Aorta (tissue), 5 donors: ENCODE measurements at regions of chr20 and their contacts with region 1.

Region 1: DNA sequence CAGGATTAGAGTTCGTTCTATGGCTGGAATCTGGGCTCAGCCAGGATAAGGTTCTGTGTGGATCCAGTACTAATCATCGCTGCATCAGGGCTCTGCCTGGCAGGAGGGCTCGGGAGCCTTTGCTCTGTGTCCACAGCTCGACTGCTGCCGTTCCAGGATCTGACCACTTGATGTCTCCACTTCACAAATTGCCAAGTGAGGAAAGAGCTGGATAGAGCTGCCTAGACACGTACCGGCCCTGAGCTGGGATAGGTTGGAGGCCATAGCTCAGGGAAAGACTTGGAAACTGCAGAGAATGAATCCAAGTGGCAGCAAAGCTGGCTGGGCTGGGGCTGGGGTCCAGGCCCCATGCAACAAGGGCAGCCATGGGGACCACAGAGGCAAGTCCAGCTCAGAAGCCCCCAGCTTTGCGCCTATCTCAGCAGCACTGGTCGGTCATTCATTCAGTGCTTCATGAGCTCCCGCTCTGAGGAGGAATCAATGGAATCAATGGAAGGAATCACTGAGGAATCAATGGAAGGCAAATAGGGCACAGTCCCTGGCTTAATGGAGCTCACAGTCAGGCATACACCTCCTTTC is 38.0 kb upstream of the TOP1 start:
- DNase-seq: peak; percentile 87 to 89
- ATAC-seq: peak; percentile 92
- H3K4me3 ChIP-seq: no peak overlapping the region
- H3K27ac ChIP-seq: no peak overlapping the region
- H3K4me1 ChIP-seq: no peaks in the 10 kb centered on the region
- H3K27me3 ChIP-seq: no peaks in the 10 kb centered on the region

Region 2: GRCh38 chr20:40931410-40932044 is 59.1 kb before region 1 on chr20:
- intact Hi-C with region 1: no loop called
- DNase-seq: no peak
- ATAC-seq: no peak
- H3K4me3 ChIP-seq: no peak overlapping the region
- H3K27ac ChIP-seq: peak overlapping the region in 1 of 2 donors; percentile 15
- H3K4me1 ChIP-seq: no peaks in the 10 kb centered on the region
- H3K27me3 ChIP-seq: peaks cover 0 to 3% of the 10 kb centered on the region in 2 donors

Region 3: DNA sequence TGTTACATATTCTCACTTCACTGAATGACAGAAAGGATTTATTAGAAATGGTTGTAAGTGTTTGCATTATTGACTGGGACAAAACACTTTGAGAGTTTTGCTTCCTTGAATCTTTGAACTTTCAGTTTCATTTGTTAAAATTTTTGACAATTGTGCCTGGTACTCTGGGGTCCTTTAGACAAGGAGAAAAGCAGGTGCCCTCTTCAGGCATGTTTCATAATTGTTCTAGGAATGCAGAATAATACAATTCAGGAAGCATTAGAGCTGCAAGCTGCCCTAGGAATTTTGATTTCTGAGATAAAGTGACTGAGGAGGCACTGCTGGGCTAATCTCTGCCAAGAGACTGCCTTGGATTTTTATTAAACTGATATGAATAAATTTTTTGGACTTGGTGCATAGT is 87.7 kb after region 1 on chr20:
- intact Hi-C with region 1: loop called (anchors 5 kb)
- DNase-seq: no peak
- ATAC-seq: peak; percentile 68
- H3K4me3 ChIP-seq: no peak overlapping the region
- H3K27ac ChIP-seq: no peak overlapping the region
- H3K4me1 ChIP-seq: peaks cover 1 to 6% of the 10 kb centered on the region in 2 donors
- H3K27me3 ChIP-seq: no peaks in the 10 kb centered on the region

Region 4: GRCh38 chr20:41095110-41095969 is 104.7 kb after region 1 on chr20:
- intact Hi-C with region 1: loop called (anchors 2 kb)
- DNase-seq: peak; percentile 60 to 82
- ATAC-seq: peak; percentile 81
- H3K4me3 ChIP-seq: no peak overlapping the region
- H3K27ac ChIP-seq: no peak overlapping the region
- H3K4me1 ChIP-seq: no peaks in the 10 kb centered on the region
- H3K27me3 ChIP-seq: no peaks in the 10 kb centered on the region